ENCODE measurements at regions of chr5 and their contacts with region 1.

Region 1: DNA sequence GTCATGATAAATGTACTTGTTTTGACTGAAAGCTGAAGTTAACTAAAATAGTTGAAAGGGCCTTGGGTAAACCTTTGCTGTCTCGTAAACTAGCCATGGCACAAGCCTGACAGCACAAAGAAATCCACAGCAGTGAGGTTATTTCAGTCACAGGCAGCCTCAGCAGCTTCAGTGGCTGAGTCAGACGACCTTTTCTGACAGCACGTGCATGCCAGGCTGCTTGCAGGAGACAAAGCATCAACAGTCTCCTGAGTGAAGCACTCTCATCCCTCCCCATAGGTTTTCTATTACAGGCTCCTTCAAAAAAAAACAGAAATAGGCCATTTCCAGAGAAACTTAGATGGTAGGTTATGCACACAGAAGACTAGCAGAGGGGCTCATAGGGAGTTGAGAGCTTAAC is 34.6 kb downstream of the OXCT1 start:
- DNase-seq: no peak
- H3K4me3 ChIP-seq: no peak overlapping the region
- H3K27ac ChIP-seq: no peak overlapping the region
- H3K4me1 ChIP-seq: no peaks in the 10 kb centered on the region
- CTCF ChIP-seq: no peak

Region 2: GRCh38 chr5:40904205-40904993 is 931.2 kb before region 1 on chr5:
- CTCF ChIA-PET with region 1: no interaction called
- POLR2A ChIA-PET with region 1: no interaction called
- intact Hi-C with region 1: loop called (anchors 10 kb)
- DNase-seq: peak; percentile 52
- H3K4me3 ChIP-seq: no peak overlapping the region
- H3K27ac ChIP-seq: no peak overlapping the region
- H3K4me1 ChIP-seq: no peaks in the 10 kb centered on the region
- CTCF ChIP-seq: peak; percentile 94